ENCODE measurements at regions of chr10 and their contacts with region 1.

Region 1: DNA sequence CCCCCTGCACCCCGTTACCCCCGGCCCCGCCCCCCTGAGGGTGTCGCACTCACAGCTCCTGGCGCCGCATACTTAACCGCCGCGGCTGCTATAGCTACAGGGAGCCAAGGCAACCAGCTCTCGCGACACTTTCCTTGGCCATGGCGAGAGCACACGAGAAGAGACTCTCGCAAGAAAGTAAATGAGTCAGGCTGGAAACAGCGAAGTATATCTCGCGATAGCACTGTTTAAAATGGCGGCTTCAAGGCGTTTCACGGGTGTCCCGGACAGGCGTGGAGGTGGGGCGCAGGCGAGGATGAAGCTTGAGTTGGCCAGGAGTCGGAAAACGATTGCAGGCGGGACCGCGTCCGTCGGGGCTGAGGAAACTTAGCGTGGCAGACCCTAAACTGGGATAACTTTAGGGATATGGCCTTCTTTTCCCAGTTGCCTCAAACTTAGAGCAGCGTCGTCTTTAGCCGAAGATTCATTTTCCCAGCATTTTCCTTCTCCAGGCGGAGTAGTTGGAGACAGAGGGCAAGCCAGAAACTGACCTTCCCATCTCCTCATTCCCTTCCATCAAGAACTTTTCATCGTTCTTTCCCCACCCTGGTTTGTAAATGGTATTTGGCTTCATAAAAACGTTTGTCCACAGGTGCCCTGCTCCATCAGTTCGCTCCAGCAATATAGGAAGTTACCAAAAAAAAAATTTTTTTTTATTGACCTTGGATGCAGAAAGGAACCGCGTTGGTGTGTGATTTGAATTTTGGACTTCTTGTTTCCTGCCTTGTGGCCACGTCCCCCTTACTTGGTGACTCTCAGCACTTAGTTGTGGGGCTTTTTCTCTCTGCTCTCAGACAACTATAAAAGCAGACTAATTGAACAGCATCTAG is 15.2 kb downstream of the MYOZ1 start:
- DNase-seq: peak; percentile 64 to 96 (median 86)
- H3K4me3 ChIP-seq: peak overlapping the region; percentile 59 to 94 (median 83)
- H3K27ac ChIP-seq: peak overlapping the region; percentile 18 to 95 (median 87)
- H3K27me3 ChIP-seq: no peaks in the 10 kb centered on the region
- CTCF ChIP-seq: peak in 2 of 56 donors; percentile 12 to 18

Region 2: DNA sequence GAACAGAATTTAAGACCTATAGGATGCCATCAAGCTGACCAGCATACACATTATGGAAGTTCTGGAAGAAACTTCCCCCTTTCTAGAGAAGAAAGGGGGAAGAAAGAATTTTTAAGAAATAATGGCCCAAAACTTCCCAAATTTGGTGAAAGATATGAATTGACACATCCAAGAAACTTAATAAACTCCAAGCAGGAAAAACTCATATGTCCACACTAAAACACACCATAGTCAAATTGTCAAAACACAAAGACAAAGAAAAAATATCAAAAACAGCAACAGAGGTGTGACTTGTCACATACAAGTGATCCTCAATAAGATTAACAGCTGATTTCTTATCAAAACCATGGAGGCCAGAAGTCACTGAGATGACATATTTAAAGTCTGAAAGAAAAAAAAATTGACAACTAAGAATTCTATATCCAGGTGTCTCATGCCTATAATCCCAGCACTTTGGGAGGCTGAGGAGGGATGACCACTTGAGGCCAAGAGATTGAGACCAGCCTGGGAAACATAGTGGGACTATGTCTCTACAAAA is 319.9 kb before region 1 on chr10:
- intact Hi-C with region 1: no loop called
- DNase-seq: no peak
- H3K4me3 ChIP-seq: no peak overlapping the region
- H3K27ac ChIP-seq: no peak overlapping the region
- H3K27me3 ChIP-seq: no peaks in the 10 kb centered on the region
- CTCF ChIP-seq: no peak

Region 3: GRCh38 chr10:73480158-73480557 is 146.0 kb before region 1 on chr10:
- intact Hi-C with region 1: no loop called
- DNase-seq: no peak
- H3K4me3 ChIP-seq: no peak overlapping the region
- H3K27ac ChIP-seq: no peak overlapping the region
- H3K27me3 ChIP-seq: no peaks in the 10 kb centered on the region
- CTCF ChIP-seq: no peak

Region 4: DNA sequence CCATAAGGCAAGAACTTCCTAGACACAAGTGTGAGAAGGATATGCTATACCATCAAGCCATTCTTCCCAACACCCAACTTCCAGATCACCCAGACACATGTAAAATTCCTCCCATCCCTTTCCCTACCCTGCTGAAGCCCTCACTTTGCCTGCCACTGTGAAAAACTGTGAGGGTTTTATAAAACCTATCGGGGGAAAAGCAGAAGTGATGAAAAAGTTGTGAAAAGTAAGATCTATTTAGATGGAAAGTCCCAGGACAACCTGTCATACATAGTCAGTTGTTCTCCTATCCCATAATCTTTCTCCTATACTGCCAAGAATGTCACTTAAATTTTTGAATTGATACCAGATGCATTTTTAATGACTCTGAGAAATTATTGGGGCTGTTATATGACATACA is 91.3 kb before region 1 on chr10:
- intact Hi-C with region 1: loop called in 1 of 2 experiments (anchors 5 kb)
- DNase-seq: no peak
- H3K4me3 ChIP-seq: no peak overlapping the region
- H3K27ac ChIP-seq: peak overlapping the region in 22 of 59 donors; percentile 8 to 75 (median 34)
- H3K27me3 ChIP-seq: no peaks in the 10 kb centered on the region
- CTCF ChIP-seq: no peak

Region 5: GRCh38 chr10:73591935-73592699 is 34.0 kb before region 1 on chr10:
- intact Hi-C with region 1: loop called (anchors 2 to 5 kb)
- DNase-seq: peak; percentile 11 to 89 (median 76)
- H3K4me3 ChIP-seq: peak overlapping the region in 57 of 59 donors; percentile 9 to 69 (median 54)
- H3K27ac ChIP-seq: peak overlapping the region; percentile 30 to 99 (median 95)
- H3K27me3 ChIP-seq: no peaks in the 10 kb centered on the region
- CTCF ChIP-seq: peak in 9 of 56 donors; percentile 4 to 16 (median 12)

Region 6: GRCh38 chr10:73597346-73597745 is 28.8 kb before region 1 on chr10:
- intact Hi-C with region 1: loop called (anchors 2 to 5 kb)
- DNase-seq: no peak
- H3K4me3 ChIP-seq: no peak overlapping the region
- H3K27ac ChIP-seq: peak overlapping the region in 8 of 59 donors; percentile 4 to 50 (median 13)
- H3K27me3 ChIP-seq: no peaks in the 10 kb centered on the region
- CTCF ChIP-seq: no peak

Measured in dorsolateral prefrontal cortex (tissue), 120 donors.